ENCODE measurements at regions of chr3 and their contacts with region 1.

Region 1: GRCh38 chr3:125916376-125916978 is 52.5 kb upstream of the ROPN1B start:
- DNase-seq: peak in 3 of 5 donors; percentile 99 to 100 (median 99)
- H3K4me3 ChIP-seq: peak overlapping the region; percentile 64
- H3K27ac ChIP-seq: peak overlapping the region in 1 of 2 donors; percentile 95
- H3K4me1 ChIP-seq: no peaks in the 10 kb centered on the region
- H3K27me3 ChIP-seq: no peaks in the 10 kb centered on the region
- CTCF ChIP-seq: peak in 1 of 3 donors; percentile 20
- EP300 ChIP-seq: no peak
- POLR2A ChIP-seq: peak; percentile 12

Region 2: DNA sequence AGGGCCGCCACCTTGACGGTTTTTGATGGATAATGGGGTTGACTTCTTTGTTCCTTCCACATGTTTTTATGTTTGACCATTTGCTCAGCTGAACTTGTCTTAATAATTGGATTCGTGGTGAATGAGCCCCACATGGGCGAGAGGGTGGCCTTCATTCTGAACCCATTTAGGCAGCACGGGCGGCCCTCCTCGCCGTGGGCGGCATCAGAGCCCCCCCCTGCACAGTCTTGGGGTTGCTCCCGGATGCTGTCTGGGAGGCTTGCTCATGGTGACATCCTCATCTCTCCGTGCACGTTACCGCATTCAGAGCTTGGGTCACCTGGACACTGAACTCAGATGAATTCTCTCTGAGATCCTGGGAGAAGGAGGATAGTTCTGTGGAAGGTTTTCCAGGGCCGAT is 148.8 kb before region 1 on chr3:
- intact Hi-C with region 1: loop called in 1 of 4 experiments (anchors 10 kb)
- DNase-seq: no peak
- H3K4me3 ChIP-seq: no peak overlapping the region
- H3K27ac ChIP-seq: no peak overlapping the region
- H3K4me1 ChIP-seq: peaks cover 5% of the 10 kb centered on the region
- H3K27me3 ChIP-seq: no peaks in the 10 kb centered on the region
- CTCF ChIP-seq: no peak
- EP300 ChIP-seq: no peak
- POLR2A ChIP-seq: no peak

Measured in ovary (tissue), 10 donors.